Naive thymus-derived CD4-positive, alpha-beta T cell (primary cell): ENCODE measurements at regions of chr9 and their contacts with region 1.

Region 1: DNA sequence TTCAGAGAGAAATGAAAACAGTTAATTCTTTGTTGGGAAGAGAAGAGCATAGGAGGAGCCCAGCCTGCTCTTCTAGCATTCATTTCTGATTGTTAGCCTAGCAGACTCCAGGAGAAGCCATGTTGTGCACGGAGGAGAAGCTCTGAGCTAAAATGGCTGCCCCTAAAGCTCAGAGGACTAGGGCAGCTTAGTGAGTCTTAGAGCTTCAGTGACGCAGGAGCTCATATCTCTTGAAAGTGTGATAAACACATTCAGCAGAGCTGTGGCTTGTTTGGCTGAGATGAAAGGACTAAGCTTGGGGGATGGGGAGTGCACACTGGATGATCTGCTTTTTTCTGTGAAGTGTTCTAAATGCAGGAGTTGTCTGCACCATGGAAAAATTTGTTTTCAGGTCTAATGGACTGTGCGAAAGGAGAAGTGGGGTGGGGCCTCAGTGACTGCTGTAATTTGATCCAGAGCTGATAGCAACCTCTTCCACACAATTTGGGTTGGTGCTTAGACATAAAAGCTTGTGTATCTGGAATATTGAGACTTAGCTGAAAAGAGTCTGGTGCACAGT is 58.5 kb downstream of the ZNF462 start:
- DNase-seq: peak in 7 of 9 donors; percentile 40 to 83 (median 56)
- ATAC-seq: peak; percentile 89
- H3K4me3 ChIP-seq: no peak overlapping the region
- H3K4me3 Mint-ChIP-seq: peak overlapping the region in 9 of 10 donors; percentile 8 to 69 (median 43)
- H3K27ac ChIP-seq: no peak overlapping the region
- H3K27ac Mint-ChIP-seq: peak overlapping the region; percentile 52 to 94 (median 78)
- H3K4me1 ChIP-seq: no peaks in the 10 kb centered on the region
- H3K4me1 Mint-ChIP-seq: peaks cover 0 to 38% (median 26%) of the 10 kb centered on the region in 7 donors
- H3K27me3 ChIP-seq: no peaks in the 10 kb centered on the region
- H3K27me3 Mint-ChIP-seq: peaks cover 0 to 8% (median 0%) of the 10 kb centered on the region in 5 donors

Region 2: DNA sequence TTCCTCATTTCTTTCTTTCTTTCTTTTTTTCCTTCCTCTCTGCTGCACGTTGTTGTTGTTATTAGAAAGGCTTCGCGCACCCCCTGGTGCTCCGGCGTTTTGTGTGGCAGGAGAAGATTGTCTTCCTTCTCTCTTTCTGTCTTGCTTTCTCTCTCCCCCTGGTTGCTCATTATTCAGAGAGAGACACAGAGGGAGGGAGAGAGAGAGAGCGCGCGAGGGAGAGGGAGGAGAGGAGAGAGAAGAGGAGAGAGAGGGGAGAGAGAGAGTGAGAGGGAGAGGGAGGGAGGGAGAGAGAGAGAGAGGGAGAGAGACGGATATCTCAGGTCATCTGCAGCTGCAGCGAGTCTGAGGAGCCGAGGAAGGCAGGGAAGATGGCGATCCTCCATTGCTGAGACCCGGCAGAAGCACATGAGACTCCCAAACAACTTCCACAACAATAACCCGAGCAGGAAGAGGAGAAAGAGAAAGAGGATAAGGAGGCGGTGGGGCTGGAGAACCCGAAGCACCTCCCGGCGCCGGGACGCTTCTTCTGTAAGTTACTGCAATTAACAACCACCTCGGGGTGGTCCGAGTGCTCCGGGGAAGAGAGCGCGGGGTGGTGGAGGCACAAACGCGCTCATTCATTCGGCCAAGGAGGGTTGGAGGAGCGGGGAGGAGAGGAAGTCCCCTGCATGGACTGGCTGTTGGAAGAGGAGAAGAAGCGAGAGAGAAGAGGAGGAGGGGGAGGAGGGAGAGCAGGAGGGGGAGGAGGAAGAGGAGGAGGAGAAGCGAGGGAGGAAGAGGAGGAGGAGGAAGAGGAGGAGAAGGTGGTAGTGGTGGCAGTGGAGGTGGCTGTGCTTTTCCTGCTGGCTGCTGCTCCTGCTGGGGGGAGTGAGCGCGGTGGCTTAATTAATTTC is 58.3 kb before region 1 on chr9 and contains the start of gene ZNF462:
- CTCF ChIA-PET with region 1: no interaction called
- POLR2A ChIA-PET with region 1: no interaction called
- intact Hi-C with region 1: loop called in 1 of 2 experiments (anchors 2 kb)
- DNase-seq: no peak
- ATAC-seq: no peak
- H3K4me3 ChIP-seq: no peak within 1 kb of the TSS
- H3K4me3 Mint-ChIP-seq: peak within 1 kb of the TSS; percentile 70 to 95 (median 86)
- H3K27ac ChIP-seq: no peak within 1 kb of the TSS
- H3K27ac Mint-ChIP-seq: peak within 1 kb of the TSS in 2 of 9 donors; percentile 31 to 59
- H3K4me1 ChIP-seq: no peaks in the 10 kb centered on the region
- H3K4me1 Mint-ChIP-seq: peaks cover 15 to 52% (median 35%) of the 10 kb centered on the region in 7 donors
- H3K27me3 ChIP-seq: peaks cover 4 to 17% of the 10 kb centered on the region in 2 donors
- H3K27me3 Mint-ChIP-seq: peaks cover 72 to 87% (median 85%) of the 10 kb centered on the region in 5 donors
- total RNA-seq, gene ZNF462: 0.11 to 3.2 (median 0.57) TPM

Region 3: GRCh38 chr9:107112707-107113243 is 191.4 kb after region 1 on chr9:
- CTCF ChIA-PET with region 1: no interaction called
- POLR2A ChIA-PET with region 1: no interaction called
- intact Hi-C with region 1: loop called in 1 of 2 experiments (anchors 10 kb)
- DNase-seq: no peak
- ATAC-seq: no peak
- H3K4me3 ChIP-seq: no peak overlapping the region
- H3K4me3 Mint-ChIP-seq: no peak overlapping the region
- H3K27ac ChIP-seq: no peak overlapping the region
- H3K27ac Mint-ChIP-seq: no peak overlapping the region
- H3K4me1 ChIP-seq: no peaks in the 10 kb centered on the region
- H3K4me1 Mint-ChIP-seq: peaks cover 0 to 6% (median 0%) of the 10 kb centered on the region in 7 donors
- H3K27me3 ChIP-seq: no peaks in the 10 kb centered on the region
- H3K27me3 Mint-ChIP-seq: peaks cover 0 to 26% (median 15%) of the 10 kb centered on the region in 5 donors